ENCODE measurements at regions of chr11 and their contacts with region 1.

Region 1: GRCh38 chr11:70816156-70816678 is 417.9 kb downstream of the CTTN start:
- DNase-seq: no peak
- CTCF ChIP-seq: no peak

Region 2: GRCh38 chr11:70804139-70804837 is 11.9 kb before region 1 on chr11:
- CTCF ChIA-PET with region 1: interaction called, 17 read pairs
- POLR2A ChIA-PET with region 1: no interaction called
- DNase-seq: no peak
- CTCF ChIP-seq: no peak

Region 3: DNA sequence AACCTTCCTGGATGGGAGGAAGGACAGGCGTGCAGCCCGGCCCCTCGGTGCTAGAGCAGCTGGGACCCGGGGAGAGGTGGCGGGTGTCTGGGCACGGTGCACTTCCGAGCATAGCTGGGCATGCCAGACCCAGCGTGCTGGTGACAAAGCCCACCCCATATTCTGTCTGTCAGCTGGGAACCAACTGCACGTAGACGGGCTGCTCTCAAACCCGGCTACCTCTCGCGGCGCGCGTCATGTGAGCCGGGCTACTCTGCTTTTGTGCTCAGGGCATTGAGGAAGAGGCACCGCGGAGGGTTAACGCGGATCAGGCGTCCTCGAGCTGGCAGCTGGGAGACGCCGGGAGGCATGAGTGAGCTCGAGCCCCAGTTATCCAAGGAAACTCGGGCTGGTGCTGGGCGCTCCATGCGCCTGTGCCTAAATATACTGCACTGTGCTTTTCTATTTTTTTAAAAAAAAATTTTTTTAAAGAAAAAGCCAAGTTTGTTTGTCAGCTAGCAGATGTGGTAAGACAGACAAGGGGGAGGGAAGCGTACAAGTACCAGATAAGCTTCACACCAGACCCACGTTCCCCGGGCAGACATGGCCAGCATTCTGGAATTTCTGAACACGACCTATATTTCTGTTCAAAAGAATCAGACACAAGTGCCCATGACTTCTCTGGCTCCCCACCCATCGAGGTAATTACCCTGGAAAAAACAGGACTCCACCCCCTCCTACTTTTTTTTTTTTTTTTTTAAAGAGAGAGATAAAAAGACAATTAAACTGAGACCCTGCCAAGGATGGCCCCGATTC is 10.5 kb after region 1 on chr11:
- CTCF ChIA-PET with region 1: interaction called, 14 read pairs
- POLR2A ChIA-PET with region 1: no interaction called
- DNase-seq: no peak
- CTCF ChIP-seq: no peak

Region 4: GRCh38 chr11:70872955-70873735 is 56.9 kb after region 1 on chr11:
- CTCF ChIA-PET with region 1: no interaction called
- POLR2A ChIA-PET with region 1: no interaction called
- DNase-seq: no peak
- CTCF ChIP-seq: no peak